OCI-LY7 (cell line): ENCODE measurements at regions of chr3 and their contacts with region 1.

Region 1: GRCh38 chr3:124928333-124929202 is 6.0 kb downstream of the MUC13 start:
- DNase-seq: peak; percentile 60
- H3K4me3 ChIP-seq: no peak overlapping the region
- H3K27ac ChIP-seq: no peak overlapping the region
- H3K4me1 ChIP-seq: no peaks in the 10 kb centered on the region
- CTCF ChIP-seq: peak; percentile 90

Region 2: DNA sequence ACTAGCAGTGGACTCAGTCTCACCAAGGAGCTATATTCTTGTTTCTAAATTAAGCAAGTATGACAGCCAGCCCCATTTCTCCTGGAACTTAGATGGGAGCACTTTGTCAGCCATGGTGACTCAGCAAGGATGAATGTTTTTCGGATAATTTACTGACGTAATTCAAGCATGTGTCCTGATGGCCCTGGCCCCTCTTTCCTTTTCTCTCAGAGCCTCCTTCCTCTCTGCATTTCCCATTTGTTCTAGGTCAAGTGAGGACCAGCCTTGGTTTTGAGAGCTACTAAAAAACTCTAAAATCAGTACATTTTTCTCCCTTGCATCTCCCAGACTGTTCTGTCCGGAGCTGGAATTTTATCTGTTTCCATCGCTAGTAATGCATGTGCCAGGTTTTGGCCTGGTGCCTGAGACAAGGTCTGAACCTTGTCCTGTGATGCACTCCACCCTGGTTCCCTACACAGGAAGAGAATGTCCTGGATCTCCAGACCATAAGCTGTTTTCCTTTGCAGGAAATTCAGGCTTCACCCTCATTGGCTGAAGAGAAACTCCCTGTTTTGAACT is 680.0 kb before region 1 on chr3:
- CTCF ChIA-PET with region 1: no interaction called
- POLR2A ChIA-PET with region 1: no interaction called
- intact Hi-C with region 1: no loop called
- DNase-seq: no peak
- H3K4me3 ChIP-seq: no peak overlapping the region
- H3K27ac ChIP-seq: no peak overlapping the region
- H3K4me1 ChIP-seq: no peaks in the 10 kb centered on the region
- CTCF ChIP-seq: no peak

Region 3: GRCh38 chr3:124780761-124781475 is 147.7 kb before region 1 on chr3:
- CTCF ChIA-PET with region 1: no interaction called
- POLR2A ChIA-PET with region 1: no interaction called
- intact Hi-C with region 1: no loop called
- DNase-seq: no peak
- H3K4me3 ChIP-seq: no peak overlapping the region
- H3K27ac ChIP-seq: no peak overlapping the region
- H3K4me1 ChIP-seq: no peaks in the 10 kb centered on the region
- CTCF ChIP-seq: no peak

Region 4: GRCh38 chr3:125163739-125164601 is 235.4 kb after region 1 on chr3:
- CTCF ChIA-PET with region 1: no interaction called
- POLR2A ChIA-PET with region 1: no interaction called
- intact Hi-C with region 1: loop called (anchors 2 kb)
- DNase-seq: peak; percentile 27
- H3K4me3 ChIP-seq: no peak overlapping the region
- H3K27ac ChIP-seq: peak overlapping the region; percentile 4
- H3K4me1 ChIP-seq: peaks cover 16% of the 10 kb centered on the region
- CTCF ChIP-seq: peak; percentile 51; the same call in 1 of the 2 replicates

Region 5: GRCh38 chr3:125202197-125202596 is 273.6 kb after region 1 on chr3:
- CTCF ChIA-PET with region 1: no interaction called
- POLR2A ChIA-PET with region 1: no interaction called
- intact Hi-C with region 1: loop called (anchors 1 kb)
- DNase-seq: peak; percentile 16
- H3K4me3 ChIP-seq: no peak overlapping the region
- H3K27ac ChIP-seq: no peak overlapping the region
- H3K4me1 ChIP-seq: no peaks in the 10 kb centered on the region
- CTCF ChIP-seq: peak; percentile 67

Region 6: GRCh38 chr3:125437631-125438435 is 509.3 kb after region 1 on chr3:
- CTCF ChIA-PET with region 1: no interaction called
- POLR2A ChIA-PET with region 1: no interaction called
- intact Hi-C with region 1: loop called (anchors 2 kb)
- DNase-seq: peak; percentile 47
- H3K4me3 ChIP-seq: no peak overlapping the region
- H3K27ac ChIP-seq: no peak overlapping the region
- H3K4me1 ChIP-seq: no peaks in the 10 kb centered on the region
- CTCF ChIP-seq: peak; percentile 99